CD8-positive, alpha-beta T cell (primary cell): ENCODE measurements at regions of chr11 and their contacts with region 1.

Region 1: DNA sequence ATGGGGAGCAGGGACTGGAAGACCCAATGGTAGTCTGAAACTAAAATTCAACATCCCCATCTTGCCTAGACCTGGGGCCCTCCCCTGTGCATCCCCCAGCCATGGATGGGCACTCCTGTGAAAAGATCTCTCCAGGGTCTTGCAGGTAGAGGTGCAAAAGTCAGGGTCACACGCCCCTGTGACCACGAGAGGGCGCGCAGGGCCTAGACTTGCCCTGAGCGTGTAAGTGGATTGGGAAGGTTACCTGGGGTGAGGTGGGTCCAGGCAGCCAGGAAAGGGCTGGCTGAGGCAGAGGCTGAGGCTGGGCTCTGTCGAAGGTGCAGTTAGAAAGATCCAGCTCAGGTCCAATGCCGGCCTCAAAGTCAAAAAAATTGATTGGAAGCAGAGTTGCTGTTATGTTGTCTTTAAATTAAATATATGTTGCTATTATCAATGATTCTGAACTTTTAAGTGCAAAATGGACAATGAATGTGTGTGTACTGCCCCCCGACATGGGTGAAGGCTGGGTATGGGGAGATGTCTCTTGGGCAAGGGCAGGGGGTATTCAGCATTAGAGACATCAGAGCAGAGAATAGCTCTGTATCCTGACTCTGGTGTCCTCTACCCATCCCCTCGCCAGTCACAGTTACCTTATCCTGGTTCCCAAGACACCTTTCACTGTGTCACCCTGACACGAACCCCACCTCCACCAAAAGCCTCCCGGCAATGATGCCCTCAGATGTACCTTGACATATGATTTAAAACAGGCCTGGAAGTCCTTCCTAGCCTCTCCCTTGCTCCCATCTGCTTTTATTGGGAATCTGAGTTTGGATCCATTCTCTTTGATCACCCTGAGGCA is 4.7 kb upstream of the POU2F3 start:
- DNase-seq: peak; percentile 13 to 68 (median 49)
- ATAC-seq: peak; percentile 55
- H3K4me3 ChIP-seq: no peak overlapping the region
- H3K4me3 Mint-ChIP-seq: no peak overlapping the region
- H3K27ac ChIP-seq: no peak overlapping the region
- H3K27ac Mint-ChIP-seq: no peak overlapping the region
- H3K4me1 ChIP-seq: no peaks in the 10 kb centered on the region
- H3K4me1 Mint-ChIP-seq: no peaks in the 10 kb centered on the region
- H3K27me3 ChIP-seq: peaks cover 2 to 8% of the 10 kb centered on the region in 2 experiments
- H3K27me3 Mint-ChIP-seq: peaks cover 35% of the 10 kb centered on the region
- CTCF ChIP-seq: peak; percentile 63

Region 2: GRCh38 chr11:119774172-119774763 is 461.0 kb before region 1 on chr11:
- CTCF ChIA-PET with region 1: no interaction called
- POLR2A ChIA-PET with region 1: no interaction called
- intact Hi-C with region 1: no loop called
- DNase-seq: no peak
- ATAC-seq: no peak
- H3K4me3 ChIP-seq: no peak overlapping the region
- H3K4me3 Mint-ChIP-seq: no peak overlapping the region
- H3K27ac ChIP-seq: no peak overlapping the region
- H3K27ac Mint-ChIP-seq: no peak overlapping the region
- H3K4me1 ChIP-seq: no peaks in the 10 kb centered on the region
- H3K4me1 Mint-ChIP-seq: no peaks in the 10 kb centered on the region
- H3K27me3 ChIP-seq: no peaks in the 10 kb centered on the region
- H3K27me3 Mint-ChIP-seq: peaks cover 9% of the 10 kb centered on the region
- CTCF ChIP-seq: no peak

Region 3: DNA sequence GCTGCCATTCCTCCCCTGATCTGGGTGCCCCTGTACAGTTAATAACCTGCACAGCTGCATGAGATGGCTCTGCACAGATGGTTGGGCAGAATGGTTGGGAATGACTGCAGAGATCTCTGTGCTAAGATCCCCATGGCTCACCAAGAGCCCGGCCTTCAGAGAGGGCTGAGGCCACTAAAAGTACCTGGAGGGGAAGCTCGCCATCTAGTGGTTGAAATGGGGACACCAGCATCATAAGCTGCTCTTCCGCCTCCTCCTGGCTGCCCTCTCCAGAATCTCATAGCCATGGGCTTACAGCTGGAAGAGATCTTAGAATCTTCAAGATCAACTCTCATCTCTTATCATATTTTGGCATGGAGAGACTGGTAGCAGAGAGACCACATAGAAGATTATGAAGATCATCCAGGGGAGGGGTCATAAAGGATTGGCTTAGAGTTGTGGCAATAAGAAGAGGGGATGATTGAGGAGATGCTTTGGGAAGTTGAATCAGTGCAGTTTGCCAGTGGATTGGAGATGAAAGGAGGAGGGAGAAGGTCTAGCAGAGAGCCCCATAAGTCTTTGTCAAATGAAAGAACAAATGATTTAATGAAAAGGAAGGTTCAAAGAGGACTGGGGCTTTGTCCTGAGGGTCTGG is 67.9 kb after region 1 on chr11:
- CTCF ChIA-PET with region 1: interaction called, 28 read pairs
- POLR2A ChIA-PET with region 1: no interaction called
- intact Hi-C with region 1: loop called (anchors 1 to 2 kb)
- DNase-seq: peak; percentile 13 to 74 (median 49)
- ATAC-seq: peak; percentile 68
- H3K4me3 ChIP-seq: no peak overlapping the region
- H3K4me3 Mint-ChIP-seq: no peak overlapping the region
- H3K27ac ChIP-seq: no peak overlapping the region
- H3K27ac Mint-ChIP-seq: no peak overlapping the region
- H3K4me1 ChIP-seq: no peaks in the 10 kb centered on the region
- H3K4me1 Mint-ChIP-seq: no peaks in the 10 kb centered on the region
- H3K27me3 ChIP-seq: peaks cover 0 to 1% of the 10 kb centered on the region in 2 experiments
- H3K27me3 Mint-ChIP-seq: peaks cover 28% of the 10 kb centered on the region
- CTCF ChIP-seq: peak; percentile 89

Region 4: DNA sequence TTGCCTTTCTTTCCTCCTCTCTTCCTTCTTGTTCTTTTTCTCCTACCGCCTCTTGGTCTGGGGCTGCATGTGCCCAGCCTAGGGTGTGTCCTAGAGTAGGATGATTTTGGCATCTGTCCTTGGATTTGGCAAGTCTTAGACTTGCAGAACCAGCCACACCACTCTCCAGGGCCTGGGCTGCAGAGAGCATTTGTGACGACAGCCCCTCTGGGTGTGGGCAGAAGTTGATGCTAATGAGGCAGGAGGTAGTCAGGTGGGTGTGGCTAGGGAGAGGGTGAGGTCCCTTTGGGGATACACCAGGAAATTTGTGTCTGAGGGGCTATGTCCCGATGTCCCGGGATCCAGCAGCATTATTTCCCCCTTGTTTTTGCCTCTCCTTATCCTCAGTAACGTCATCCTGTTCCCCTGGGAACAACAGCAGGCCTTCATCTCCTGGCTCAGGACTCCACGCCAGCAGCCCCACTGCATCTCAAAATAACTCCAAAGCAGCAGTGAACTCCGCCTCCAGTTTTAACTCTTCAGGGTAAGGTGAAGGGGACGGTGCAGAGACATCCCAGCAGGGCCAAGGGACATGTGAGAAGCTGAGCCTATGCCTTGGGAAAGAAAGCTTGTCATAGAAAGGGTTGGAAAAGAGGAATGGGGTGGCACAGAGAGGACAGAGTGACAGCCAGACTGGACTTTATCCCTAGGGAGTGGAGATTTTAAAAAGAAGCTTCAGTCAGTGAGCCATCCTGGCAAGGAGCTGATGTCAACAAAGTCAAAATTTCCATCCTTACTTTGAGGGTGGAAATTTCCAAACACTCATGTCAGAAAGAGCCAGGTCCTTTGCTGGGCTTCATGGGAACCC is 81.8 kb after region 1 on chr11:
- CTCF ChIA-PET with region 1: no interaction called
- POLR2A ChIA-PET with region 1: no interaction called
- intact Hi-C with region 1: no loop called
- DNase-seq: no peak
- ATAC-seq: no peak
- H3K4me3 ChIP-seq: no peak overlapping the region
- H3K4me3 Mint-ChIP-seq: no peak overlapping the region
- H3K27ac ChIP-seq: no peak overlapping the region
- H3K27ac Mint-ChIP-seq: no peak overlapping the region
- H3K4me1 ChIP-seq: no peaks in the 10 kb centered on the region
- H3K4me1 Mint-ChIP-seq: no peaks in the 10 kb centered on the region
- H3K27me3 ChIP-seq: no peaks in the 10 kb centered on the region
- H3K27me3 Mint-ChIP-seq: peaks cover 22% of the 10 kb centered on the region
- CTCF ChIP-seq: no peak

Region 5: GRCh38 chr11:120682866-120683265 is 447.6 kb after region 1 on chr11:
- CTCF ChIA-PET with region 1: interaction called, 3 read pairs
- POLR2A ChIA-PET with region 1: no interaction called
- intact Hi-C with region 1: loop called in 1 of 2 experiments (anchors 5 kb)
- DNase-seq: no peak
- ATAC-seq: no peak
- H3K4me3 ChIP-seq: no peak overlapping the region
- H3K4me3 Mint-ChIP-seq: no peak overlapping the region
- H3K27ac ChIP-seq: no peak overlapping the region
- H3K27ac Mint-ChIP-seq: no peak overlapping the region
- H3K4me1 ChIP-seq: no peaks in the 10 kb centered on the region
- H3K4me1 Mint-ChIP-seq: no peaks in the 10 kb centered on the region
- H3K27me3 ChIP-seq: no peaks in the 10 kb centered on the region
- H3K27me3 Mint-ChIP-seq: peaks cover 25% of the 10 kb centered on the region
- CTCF ChIP-seq: no peak

Region 6: DNA sequence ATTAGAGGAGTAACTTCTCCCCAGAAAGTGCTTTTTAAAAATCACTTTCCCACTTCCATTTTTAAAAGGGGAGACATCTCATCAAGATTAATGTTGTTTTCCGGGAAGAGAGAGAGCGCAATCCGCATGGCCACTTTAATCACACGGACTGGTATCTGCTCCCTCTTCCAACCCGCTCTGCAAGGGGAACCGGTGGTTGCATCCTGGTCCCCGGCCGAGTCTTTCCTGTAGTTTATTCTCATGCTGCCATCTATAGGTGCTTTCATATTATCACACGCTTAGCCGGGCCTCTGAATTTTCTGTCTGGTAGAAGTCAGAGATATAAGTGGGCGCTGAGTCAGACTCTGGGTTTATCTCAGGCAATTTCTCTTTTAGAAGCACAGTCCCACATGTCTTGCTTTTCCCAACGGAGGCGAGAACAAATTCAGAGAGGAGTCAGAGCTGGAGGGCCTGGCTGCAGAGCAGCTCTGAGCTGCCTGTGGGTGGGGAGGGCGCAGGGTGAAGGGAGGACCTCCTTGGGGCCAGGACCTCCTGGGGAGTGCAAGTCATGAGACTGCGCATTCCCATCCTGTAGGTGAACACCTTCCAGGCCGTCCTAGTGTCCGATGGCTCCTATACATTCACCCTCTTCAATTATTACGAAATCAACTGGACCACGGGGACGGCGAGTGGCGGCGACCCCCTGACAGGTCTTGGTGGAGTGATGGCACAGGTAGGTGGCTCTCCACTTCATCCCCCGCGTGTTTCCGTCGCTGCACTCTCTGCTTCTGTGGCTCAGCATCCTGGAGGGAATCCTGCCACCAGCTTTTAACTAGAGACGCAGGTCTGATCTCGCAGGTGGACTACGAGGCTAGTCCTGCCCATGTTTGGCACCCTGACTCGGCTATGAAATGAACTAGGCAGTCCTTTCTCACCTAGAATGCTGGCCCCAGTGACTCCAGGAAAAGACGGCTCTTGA is 877.5 kb after region 1 on chr11:
- CTCF ChIA-PET with region 1: no interaction called
- POLR2A ChIA-PET with region 1: no interaction called
- intact Hi-C with region 1: loop called in 1 of 2 experiments (anchors 2 kb)
- DNase-seq: peak in 5 of 9 experiments; percentile 13 to 45 (median 27)
- ATAC-seq: no peak
- H3K4me3 ChIP-seq: no peak overlapping the region
- H3K4me3 Mint-ChIP-seq: no peak overlapping the region
- H3K27ac ChIP-seq: no peak overlapping the region
- H3K27ac Mint-ChIP-seq: no peak overlapping the region
- H3K4me1 ChIP-seq: peaks cover 5% of the 10 kb centered on the region
- H3K4me1 Mint-ChIP-seq: no peaks in the 10 kb centered on the region
- H3K27me3 ChIP-seq: peaks cover 0 to 4% of the 10 kb centered on the region in 2 experiments
- H3K27me3 Mint-ChIP-seq: peaks cover 9% of the 10 kb centered on the region
- CTCF ChIP-seq: peak; percentile 49

Region 7: GRCh38 chr11:121194731-121195596 is 959.7 kb after region 1 on chr11:
- CTCF ChIA-PET with region 1: no interaction called
- POLR2A ChIA-PET with region 1: no interaction called
- intact Hi-C with region 1: loop called in 1 of 2 experiments (anchors 5 kb)
- DNase-seq: peak in 8 of 9 experiments; percentile 30 to 76 (median 60)
- ATAC-seq: no peak
- H3K4me3 ChIP-seq: no peak overlapping the region
- H3K4me3 Mint-ChIP-seq: no peak overlapping the region
- H3K27ac ChIP-seq: no peak overlapping the region
- H3K27ac Mint-ChIP-seq: no peak overlapping the region
- H3K4me1 ChIP-seq: no peaks in the 10 kb centered on the region
- H3K4me1 Mint-ChIP-seq: peaks cover 6% of the 10 kb centered on the region
- H3K27me3 ChIP-seq: no peaks in the 10 kb centered on the region
- H3K27me3 Mint-ChIP-seq: peaks cover 33% of the 10 kb centered on the region
- CTCF ChIP-seq: peak; percentile 90